Ovary (tissue), 10 donors: ENCODE measurements at regions of chr17 and their contacts with region 1.

Region 1: GRCh38 chr17:78421484-78422266 is 43.2 kb downstream of the PGS1 start:
- DNase-seq: peak; percentile 60 to 80 (median 79)
- H3K4me3 ChIP-seq: no peak overlapping the region
- H3K27ac ChIP-seq: no peak overlapping the region
- H3K4me1 ChIP-seq: no peaks in the 10 kb centered on the region
- H3K27me3 ChIP-seq: no peaks in the 10 kb centered on the region
- CTCF ChIP-seq: peak; percentile 92 to 95 (median 94)
- EP300 ChIP-seq: no peak
- POLR2A ChIP-seq: no peak

Region 2: DNA sequence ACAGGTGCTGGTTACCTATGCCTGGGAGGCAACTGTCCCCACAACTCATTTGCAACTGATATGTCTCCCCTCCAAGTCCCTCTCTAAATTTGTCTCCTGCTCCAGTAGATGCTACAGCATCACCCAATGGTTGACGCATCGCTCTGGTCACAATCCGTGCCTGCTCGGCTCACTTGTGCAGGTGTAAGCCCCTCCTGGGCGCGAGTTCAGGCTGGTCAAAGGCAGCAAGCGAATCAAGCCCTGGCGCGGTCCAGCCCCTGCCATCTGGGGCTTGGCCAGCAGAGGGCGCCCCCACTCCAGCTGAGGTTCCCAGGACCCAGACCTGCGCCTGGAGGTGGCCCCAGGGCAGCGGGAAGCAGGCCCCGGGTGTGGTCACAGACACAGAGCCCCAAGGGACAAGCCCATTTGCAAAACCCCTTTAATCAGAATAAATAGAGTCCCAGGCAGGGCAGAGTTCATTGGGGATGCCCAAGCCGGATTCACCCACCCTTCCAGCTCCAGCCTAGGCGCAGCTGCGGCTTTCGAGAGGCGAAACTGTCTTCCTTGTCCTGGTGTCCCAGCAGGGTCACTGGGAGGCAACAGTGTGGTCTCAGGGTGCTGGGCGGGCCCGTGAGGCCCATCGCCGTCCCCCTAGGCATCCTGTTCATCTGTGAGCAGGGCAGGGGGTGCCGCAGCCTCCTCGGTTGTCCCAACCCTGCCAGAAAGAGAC is 309.0 kb before region 1 on chr17:
- intact Hi-C with region 1: loop called in 2 of 4 experiments (anchors 10 kb)
- DNase-seq: peak; percentile 58 to 87 (median 79)
- H3K4me3 ChIP-seq: no peak overlapping the region
- H3K27ac ChIP-seq: no peak overlapping the region
- H3K4me1 ChIP-seq: no peaks in the 10 kb centered on the region
- H3K27me3 ChIP-seq: no peaks in the 10 kb centered on the region
- CTCF ChIP-seq: peak; percentile 96 to 99 (median 97)
- EP300 ChIP-seq: no peak
- POLR2A ChIP-seq: no peak

Region 3: GRCh38 chr17:78250891-78251794 is 170.5 kb before region 1 on chr17:
- intact Hi-C with region 1: loop called in 2 of 4 experiments (anchors 2 to 5 kb)
- DNase-seq: peak; percentile 80 to 91 (median 88)
- H3K4me3 ChIP-seq: no peak overlapping the region
- H3K27ac ChIP-seq: no peak overlapping the region
- H3K4me1 ChIP-seq: peaks cover 3% of the 10 kb centered on the region
- H3K27me3 ChIP-seq: no peaks in the 10 kb centered on the region
- CTCF ChIP-seq: peak; percentile 96 to 100 (median 96)
- EP300 ChIP-seq: no peak
- POLR2A ChIP-seq: no peak

Region 4: GRCh38 chr17:78289802-78290363 is 131.8 kb before region 1 on chr17:
- intact Hi-C with region 1: loop called (anchors 1 to 10 kb)
- DNase-seq: peak; percentile 70 to 83 (median 80)
- H3K4me3 ChIP-seq: no peak overlapping the region
- H3K27ac ChIP-seq: no peak overlapping the region
- H3K4me1 ChIP-seq: no peaks in the 10 kb centered on the region
- H3K27me3 ChIP-seq: no peaks in the 10 kb centered on the region
- CTCF ChIP-seq: peak; percentile 67 to 85 (median 79)
- EP300 ChIP-seq: no peak
- POLR2A ChIP-seq: no peak

Region 5: DNA sequence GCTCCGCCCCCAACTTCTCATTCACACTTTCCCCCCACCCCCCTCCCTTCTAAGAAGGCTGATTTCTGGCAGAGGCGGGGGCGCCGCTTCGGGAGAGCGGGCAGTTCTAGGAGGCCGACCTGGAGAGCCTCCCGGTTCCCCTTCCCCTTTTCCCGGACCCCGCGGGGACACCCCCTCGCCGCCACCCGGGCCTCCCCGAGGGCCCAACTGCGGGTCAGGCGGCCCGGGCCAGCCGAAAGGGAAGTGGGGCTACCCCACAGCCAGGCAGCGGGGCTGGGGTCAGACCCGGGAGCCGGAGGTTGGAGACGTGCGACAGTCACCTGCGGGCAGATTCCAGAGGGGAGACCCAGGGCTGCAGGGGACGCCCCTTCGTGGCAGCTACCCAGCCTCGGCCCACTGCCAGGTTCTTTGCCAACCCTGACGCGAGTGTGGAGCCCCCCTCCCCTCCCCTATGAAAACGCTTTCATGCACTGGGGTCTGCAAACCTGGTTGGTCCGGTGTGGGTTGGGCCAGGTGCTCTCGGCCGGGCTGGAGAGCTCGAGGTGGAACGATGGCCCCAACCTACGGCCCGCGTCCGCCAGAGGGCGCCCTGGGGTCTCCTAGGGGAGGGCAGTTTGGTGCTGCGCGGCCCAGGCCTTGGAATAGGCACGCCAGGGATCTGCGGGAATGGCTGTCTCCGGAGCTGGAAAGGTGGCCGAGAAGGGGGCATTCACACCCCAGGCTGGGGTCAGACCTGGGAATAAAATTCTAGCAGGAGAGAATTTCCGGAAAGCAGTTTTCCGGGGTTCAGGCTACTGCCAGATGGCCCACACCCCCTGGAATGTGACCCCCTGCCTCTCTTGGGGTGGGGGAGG is 61.1 kb before region 1 on chr17:
- intact Hi-C with region 1: loop called in 2 of 4 experiments (anchors 5 kb)
- DNase-seq: peak; percentile 88 to 96 (median 95)
- H3K4me3 ChIP-seq: peak overlapping the region; percentile 83
- H3K27ac ChIP-seq: peak overlapping the region; percentile 71 to 92
- H3K4me1 ChIP-seq: peaks cover 24% of the 10 kb centered on the region
- H3K27me3 ChIP-seq: no peaks in the 10 kb centered on the region
- CTCF ChIP-seq: peak; percentile 86 to 95 (median 89)
- EP300 ChIP-seq: no peak
- POLR2A ChIP-seq: no peak

Region 6: DNA sequence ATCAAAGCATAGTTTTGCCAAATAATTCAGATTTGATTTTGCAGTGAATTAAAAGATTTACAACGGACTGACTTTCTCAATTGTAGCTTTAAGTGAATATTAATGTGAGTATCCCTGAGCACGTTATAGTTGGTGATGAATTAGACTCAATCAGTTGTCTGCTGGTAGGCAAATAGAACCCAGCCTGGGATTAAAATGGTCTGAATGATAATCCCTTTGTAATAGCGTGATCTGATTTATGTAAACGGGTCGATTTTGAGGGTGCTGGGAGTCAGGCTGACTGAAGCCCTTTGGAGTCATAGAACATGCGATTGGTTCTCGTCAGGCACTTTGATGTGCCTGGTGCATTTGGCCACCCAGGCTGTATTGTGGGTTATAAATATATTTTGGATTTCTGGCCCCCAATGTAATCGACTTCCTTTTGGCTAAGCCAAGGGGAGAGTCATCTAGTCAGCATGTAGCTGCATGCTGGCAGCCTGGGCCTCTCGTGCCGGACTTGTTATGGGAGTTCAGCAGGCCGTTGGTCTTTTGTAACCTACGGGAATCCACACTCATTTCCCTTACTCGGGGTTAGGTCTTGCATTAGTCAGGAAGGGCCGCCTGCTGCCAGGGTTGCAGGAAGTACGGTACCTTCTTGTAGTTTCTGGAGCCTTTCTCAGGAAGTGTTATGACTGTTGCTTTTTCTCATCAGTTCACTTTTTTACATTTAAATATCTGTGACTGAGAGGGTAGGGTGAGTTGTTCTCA is 37.8 kb before region 1 on chr17:
- intact Hi-C with region 1: loop called in 1 of 4 experiments (anchors 5 kb)
- DNase-seq: peak in 3 of 5 donors; percentile 47 to 67 (median 65)
- H3K4me3 ChIP-seq: no peak overlapping the region
- H3K27ac ChIP-seq: peak overlapping the region in 1 of 2 donors; percentile 25
- H3K4me1 ChIP-seq: peaks cover 5% of the 10 kb centered on the region
- H3K27me3 ChIP-seq: no peaks in the 10 kb centered on the region
- CTCF ChIP-seq: no peak
- EP300 ChIP-seq: peak; percentile 76
- POLR2A ChIP-seq: no peak

Region 7: DNA sequence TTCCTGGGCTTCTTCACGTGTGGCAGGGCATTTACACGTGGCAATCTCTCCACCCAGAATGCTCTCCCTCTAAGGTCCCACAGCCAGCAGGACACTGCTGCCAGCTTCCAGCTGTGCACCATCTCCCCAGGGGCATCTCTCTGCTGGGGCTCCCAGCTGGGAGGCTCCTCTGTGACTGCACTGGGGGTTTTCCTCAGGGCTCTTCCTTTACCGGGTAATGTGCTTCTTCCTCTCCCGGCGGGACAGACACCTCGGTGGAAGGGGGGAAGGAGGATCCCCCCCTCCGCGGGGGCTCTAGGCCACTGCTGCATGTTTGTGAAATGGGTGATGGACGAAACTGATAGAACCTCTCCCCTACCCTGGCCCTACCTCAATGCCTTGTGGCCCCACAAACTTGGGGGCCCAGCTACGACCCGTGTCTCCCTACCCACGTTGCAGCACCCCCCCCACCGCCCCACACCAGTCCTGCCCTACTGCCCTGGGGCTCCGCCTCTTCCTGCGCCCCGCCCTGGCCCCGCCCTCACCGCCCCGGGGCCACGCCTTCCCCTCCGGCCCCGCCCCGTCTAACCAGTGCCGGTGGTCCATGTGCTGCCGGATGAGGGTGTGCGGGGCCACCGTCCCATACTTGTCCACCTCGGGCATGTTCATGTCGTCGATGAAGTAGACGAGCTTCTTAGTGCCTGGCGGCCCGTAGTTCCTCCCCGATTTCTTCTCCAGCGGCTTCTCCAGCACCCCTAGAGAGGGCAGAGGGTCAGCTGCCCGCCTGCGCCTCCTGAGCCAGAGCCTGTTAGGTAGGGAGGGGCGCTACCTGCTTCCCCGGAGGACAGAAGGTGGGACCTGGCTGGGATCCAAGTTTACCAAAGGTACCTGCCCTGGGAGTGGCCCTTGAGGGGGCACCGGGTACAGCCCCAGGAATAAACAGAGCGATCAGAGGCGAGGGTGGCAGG is 62.9 kb after region 1 on chr17:
- intact Hi-C with region 1: no loop called
- DNase-seq: peak in 1 of 5 donors; percentile 51
- H3K4me3 ChIP-seq: no peak overlapping the region
- H3K27ac ChIP-seq: no peak overlapping the region
- H3K4me1 ChIP-seq: peaks cover 2% of the 10 kb centered on the region
- H3K27me3 ChIP-seq: no peaks in the 10 kb centered on the region
- CTCF ChIP-seq: no peak
- EP300 ChIP-seq: no peak
- POLR2A ChIP-seq: no peak